Endothelial cell of umbilical vein (primary cell): ENCODE measurements at regions of chr7 and their contacts with region 1.

Region 1: GRCh38 chr7:105387621-105388372 is 924 bp downstream of the SRPK2 start:
- DNase-seq: peak; percentile 67
- H3K4me3 ChIP-seq: peak overlapping the region; percentile 49 to 98 (median 78)
- H3K27ac ChIP-seq: peak overlapping the region; percentile 32
- H3K4me1 ChIP-seq: peaks cover 15% of the 10 kb centered on the region
- H3K27me3 ChIP-seq: no peaks in the 10 kb centered on the region
- CTCF ChIP-seq: peak in 1 of 2 donors; percentile 10
- POLR2A ChIP-seq: peak; percentile 15

Region 2: DNA sequence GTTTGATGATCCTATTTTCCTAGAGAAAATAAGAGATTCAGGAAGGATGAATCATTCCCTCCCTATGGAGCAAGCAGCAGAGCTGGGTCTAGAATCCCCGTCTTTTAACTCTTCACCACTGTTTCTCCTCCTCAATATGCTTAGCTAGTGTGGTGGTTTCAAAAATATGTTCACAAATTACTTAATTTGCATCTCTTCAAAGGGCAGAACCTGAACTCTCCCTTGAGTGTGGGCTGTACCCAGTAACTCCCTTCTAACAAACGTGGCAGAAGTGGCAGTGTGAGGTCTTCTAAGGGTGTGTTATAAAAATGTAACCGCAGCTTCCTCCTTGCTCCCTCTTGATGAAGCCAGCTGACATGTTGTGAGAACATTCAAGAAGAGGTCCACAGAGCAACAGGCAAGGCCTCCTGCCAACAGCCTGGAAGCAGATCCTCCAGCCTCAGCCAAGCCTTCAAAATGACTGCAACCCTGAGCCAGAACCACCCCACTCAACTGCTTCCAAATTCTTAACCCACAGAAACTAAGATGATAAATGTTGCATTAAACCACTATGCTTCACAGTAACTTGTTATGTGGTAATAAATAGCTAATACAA is 35.7 kb before region 1 on chr7:
- CTCF ChIA-PET with region 1: no interaction called
- POLR2A ChIA-PET with region 1: no interaction called
- dilution Hi-C with region 1: no loop called
- intact Hi-C with region 1: loop called (anchors 5 kb)
- DNase-seq: peak; percentile 81
- H3K4me3 ChIP-seq: peak overlapping the region in 1 of 3 experiments; percentile 10
- H3K27ac ChIP-seq: peak overlapping the region; percentile 65
- H3K4me1 ChIP-seq: peaks cover 13% of the 10 kb centered on the region
- H3K27me3 ChIP-seq: no peaks in the 10 kb centered on the region
- CTCF ChIP-seq: no peak
- POLR2A ChIP-seq: no peak